A673 (cell line): ENCODE measurements at regions of chr14 and their contacts with region 1.

Region 1: GRCh38 chr14:62946221-62946620 is 99.0 kb downstream of the KCNH5 start:
- DNase-seq: no peak
- H3K4me3 ChIP-seq: no peak overlapping the region
- H3K27ac ChIP-seq: no peak overlapping the region
- H3K4me1 ChIP-seq: peaks cover 17% of the 10 kb centered on the region
- H3K27me3 ChIP-seq: no peaks in the 10 kb centered on the region
- CTCF ChIP-seq: no peak

Region 2: DNA sequence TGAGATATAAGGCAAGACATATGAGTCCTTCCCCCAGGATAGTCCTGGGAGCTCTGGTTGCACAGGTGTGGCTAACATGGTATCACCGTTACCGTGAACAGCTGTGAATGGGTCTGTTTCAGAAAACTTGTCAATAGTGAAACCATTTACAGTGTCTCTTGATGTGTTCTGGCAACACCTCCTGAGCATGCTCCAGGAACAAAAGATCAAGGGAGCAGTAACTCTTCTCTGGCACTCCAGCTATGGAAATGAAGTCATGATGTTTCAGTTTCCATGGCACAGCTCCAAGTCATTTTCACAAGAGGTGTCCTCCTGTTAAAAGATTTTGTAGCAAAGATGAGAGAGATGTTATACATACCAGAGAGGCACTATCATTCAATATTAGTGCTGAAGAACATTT is 930.3 kb before region 1 on chr14:
- CTCF ChIA-PET with region 1: no interaction called
- POLR2A ChIA-PET with region 1: no interaction called
- intact Hi-C with region 1: no loop called
- DNase-seq: peak; percentile 3
- H3K4me3 ChIP-seq: no peak overlapping the region
- H3K27ac ChIP-seq: no peak overlapping the region
- H3K4me1 ChIP-seq: no peaks in the 10 kb centered on the region
- H3K27me3 ChIP-seq: no peaks in the 10 kb centered on the region
- CTCF ChIP-seq: no peak

Region 3: GRCh38 chr14:62854951-62855350 is 91.3 kb before region 1 on chr14:
- CTCF ChIA-PET with region 1: no interaction called
- POLR2A ChIA-PET with region 1: interaction called, 14 read pairs
- intact Hi-C with region 1: no loop called
- DNase-seq: no peak
- H3K4me3 ChIP-seq: no peak overlapping the region
- H3K27ac ChIP-seq: no peak overlapping the region
- H3K4me1 ChIP-seq: peaks cover 16% of the 10 kb centered on the region
- H3K27me3 ChIP-seq: no peaks in the 10 kb centered on the region
- CTCF ChIP-seq: no peak